HepG2 (cell line): ENCODE measurements at regions of chr7 and their contacts with region 1.

Region 1: DNA sequence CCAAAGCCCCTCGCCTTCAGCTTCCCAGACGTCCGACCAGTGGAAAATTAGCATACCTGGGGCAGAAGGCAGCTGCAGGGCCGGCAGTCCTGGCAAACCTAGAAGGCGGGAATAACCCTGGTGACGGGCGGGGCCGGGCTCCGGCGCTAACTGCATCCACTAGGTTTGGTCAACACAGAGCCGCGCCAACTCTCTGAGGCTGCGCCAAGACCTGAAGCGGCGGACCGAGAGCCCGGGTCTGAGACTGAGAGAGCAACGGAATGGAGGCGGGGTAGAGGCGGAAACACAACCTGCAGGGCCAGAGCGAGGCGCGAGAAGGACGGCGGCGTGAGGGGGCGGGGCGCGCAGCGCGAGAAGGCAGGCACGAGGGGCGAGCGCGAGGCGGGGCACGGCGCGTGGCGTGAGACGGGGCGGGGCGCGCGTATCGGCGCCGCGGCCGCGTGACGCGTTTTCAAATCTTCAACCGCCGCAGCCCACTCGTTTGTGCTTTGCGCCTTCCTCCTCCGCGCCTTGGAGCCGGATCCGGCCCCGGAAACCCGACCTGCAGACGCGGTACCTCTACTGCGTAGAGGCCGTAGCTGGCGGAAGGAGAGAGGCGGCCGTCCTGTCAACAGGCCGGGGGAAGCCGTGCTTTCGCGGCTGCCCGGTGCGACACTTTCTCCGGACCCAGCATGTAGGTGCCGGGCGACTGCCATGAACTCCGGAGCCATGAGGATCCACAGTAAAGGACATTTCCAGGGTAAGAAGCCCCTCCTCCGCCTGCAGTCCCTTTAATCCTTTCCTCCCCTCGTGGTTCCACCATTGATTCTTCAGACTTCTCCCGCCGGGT is at the starts of genes DBF4 and SLC25A40:
- DNase-seq: peak; percentile 93
- ATAC-seq: peak; percentile 97
- H3K4me3 ChIP-seq: peak within 1 kb of the TSS; percentile 86 to 92 (median 92)
- H3K27ac ChIP-seq: peak within 1 kb of the TSS; percentile 97
- H3K4me1 ChIP-seq: peaks cover 53% of the 10 kb centered on the region
- H3K27me3 ChIP-seq: no peaks in the 10 kb centered on the region; a peak in 1 of 5 replicates
- CTCF ChIP-seq: no peak
- EP300 ChIP-seq: peak in 1 of 2 experiments; percentile 35; a peak in 1 of 4 replicates
- POLR2A ChIP-seq: peak; percentile 68 to 75
- RAD21 ChIP-seq: no peak; the same call in 1 of the 2 replicates
- total RNA-seq, gene DBF4: 64.4 and 90.0 TPM in 2 replicates
- total RNA-seq, gene SLC25A40: 13.6 and 18.0 TPM in 2 replicates

Region 2: DNA sequence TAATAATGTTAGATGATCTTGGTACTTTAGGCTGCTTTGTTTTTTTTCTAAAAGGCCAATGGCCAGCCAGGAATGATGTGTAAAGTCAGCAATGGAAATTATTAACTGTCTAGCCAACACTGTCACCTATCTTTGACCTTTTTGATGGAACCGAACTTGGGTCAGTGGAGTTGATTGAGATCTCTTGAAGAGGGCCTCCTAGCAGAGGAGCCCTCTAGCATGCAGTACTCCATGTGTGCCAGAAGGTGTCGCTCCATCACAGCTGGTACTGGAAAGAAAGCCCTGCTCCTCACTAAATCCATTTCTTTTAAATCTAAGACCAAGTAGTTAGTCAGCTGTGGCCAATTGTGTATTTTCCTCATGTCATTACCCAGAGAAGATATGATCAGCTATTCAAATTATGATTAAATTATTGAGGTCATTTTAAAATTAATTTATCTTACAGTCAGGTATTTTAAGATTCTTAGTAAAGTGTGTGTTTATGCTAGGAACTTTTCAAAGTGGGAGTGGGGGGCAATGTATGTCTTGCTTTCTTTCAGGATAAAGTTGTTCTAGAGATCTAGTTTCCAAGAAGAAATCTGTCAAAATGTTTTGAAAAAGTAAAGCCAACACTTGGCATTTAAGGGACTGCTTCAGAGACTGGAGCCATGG is 563.9 kb before region 1 on chr7:
- CTCF ChIA-PET with region 1: no interaction called
- POLR2A ChIA-PET with region 1: no interaction called
- in situ Hi-C with region 1: no loop called
- intact Hi-C with region 1: loop called (anchors 10 kb)
- DNase-seq: peak; percentile 56
- ATAC-seq: peak; percentile 84
- H3K4me3 ChIP-seq: no peak overlapping the region
- H3K27ac ChIP-seq: no peak overlapping the region
- H3K4me1 ChIP-seq: peaks cover 42% of the 10 kb centered on the region
- H3K27me3 ChIP-seq: no peaks in the 10 kb centered on the region
- CTCF ChIP-seq: peak; percentile 95
- EP300 ChIP-seq: no peak
- POLR2A ChIP-seq: no peak
- RAD21 ChIP-seq: peak; percentile 92

Region 3: GRCh38 chr7:87628780-87629569 is 247.3 kb before region 1 on chr7:
- CTCF ChIA-PET with region 1: no interaction called
- POLR2A ChIA-PET with region 1: no interaction called
- in situ Hi-C with region 1: no loop called
- intact Hi-C with region 1: loop called (anchors 5 kb)
- DNase-seq: peak; percentile 20
- ATAC-seq: peak; percentile 77
- H3K4me3 ChIP-seq: peak overlapping the region; percentile 64 to 84 (median 66)
- H3K27ac ChIP-seq: no peak overlapping the region
- H3K4me1 ChIP-seq: peaks cover 14% of the 10 kb centered on the region; the same call in 1 of the 2 replicates
- H3K27me3 ChIP-seq: peaks cover 0 to 6% of the 10 kb centered on the region in 2 experiments; a peak in 1 of 5 replicates
- CTCF ChIP-seq: no peak
- EP300 ChIP-seq: no peak
- POLR2A ChIP-seq: no peak
- RAD21 ChIP-seq: no peak

Region 4: GRCh38 chr7:88226886-88227516 is 350.7 kb after region 1 on chr7:
- CTCF ChIA-PET with region 1: no interaction called
- POLR2A ChIA-PET with region 1: no interaction called
- in situ Hi-C with region 1: no loop called
- intact Hi-C with region 1: no loop called
- DNase-seq: peak; percentile 90
- ATAC-seq: peak; percentile 94
- H3K4me3 ChIP-seq: no peak overlapping the region
- H3K27ac ChIP-seq: no peak overlapping the region
- H3K4me1 ChIP-seq: peaks cover 21% of the 10 kb centered on the region
- H3K27me3 ChIP-seq: peaks cover 0 to 44% of the 10 kb centered on the region in 2 experiments; a peak in 3 of 5 replicates
- CTCF ChIP-seq: no peak
- EP300 ChIP-seq: peak in 1 of 2 experiments; percentile 66; a peak in 1 of 4 replicates
- POLR2A ChIP-seq: no peak
- RAD21 ChIP-seq: no peak